ENCODE measurements at regions of chrX and their contacts with region 1.

Region 1: GRCh38 chrX:134186362-134187121 is 50.4 kb upstream of the CCDC160 start:
- DNase-seq: no peak

Region 2: GRCh38 chrX:134115270-134115669 is 71.3 kb before region 1 on chrX:
- intact Hi-C with region 1: loop called in 1 of 2 experiments (anchors 10 kb)
- DNase-seq: no peak

Region 3: GRCh38 chrX:134202561-134202960 is 16.0 kb after region 1 on chrX:
- intact Hi-C with region 1: no loop called
- DNase-seq: no peak

Measured in posterior vena cava (tissue), 2 donors.